CD8-positive, alpha-beta memory T cell (primary cell): ENCODE measurements at regions of chr7 and their contacts with region 1.

Region 1: DNA sequence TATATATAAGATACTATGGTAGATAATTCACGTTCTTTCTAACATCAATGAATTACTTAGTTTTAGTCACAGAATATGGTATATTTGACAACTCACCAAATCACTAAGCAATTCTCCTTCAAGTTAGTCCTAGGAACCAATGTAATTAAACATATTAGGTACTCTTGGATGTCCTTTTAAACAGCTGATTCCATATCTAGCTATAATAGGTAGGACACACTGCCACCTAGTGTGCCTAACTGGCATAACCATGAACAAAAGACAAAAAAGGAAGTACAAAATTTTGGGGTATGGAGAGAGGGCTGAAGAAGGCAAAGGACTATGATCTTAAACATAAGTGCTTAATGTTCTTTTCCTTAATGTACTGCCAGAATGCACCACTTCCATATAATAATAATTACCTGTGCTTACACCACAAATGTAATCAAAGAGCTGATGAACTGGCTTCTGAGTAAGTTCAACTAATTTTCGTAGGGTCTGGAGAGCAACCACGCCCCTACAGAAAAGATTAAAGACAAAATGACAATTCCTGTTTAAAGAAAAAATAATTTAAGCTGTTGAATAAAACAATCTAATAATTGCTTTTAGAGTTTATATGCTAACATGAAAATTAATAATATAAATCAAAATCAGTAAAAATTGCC is 28.7 kb downstream of the PNPLA8 start:
- DNase-seq: peak in 3 of 5 donors; percentile 15 to 59 (median 21)
- H3K4me3 ChIP-seq: no peak overlapping the region
- H3K4me3 Mint-ChIP-seq: no peak overlapping the region
- H3K27ac ChIP-seq: no peak overlapping the region
- H3K27ac Mint-ChIP-seq: peak overlapping the region in 1 of 8 donors; percentile 35
- H3K4me1 ChIP-seq: no peaks in the 10 kb centered on the region
- H3K4me1 Mint-ChIP-seq: peaks cover 0 to 4% (median 0%) of the 10 kb centered on the region in 3 donors
- H3K27me3 ChIP-seq: no peaks in the 10 kb centered on the region
- H3K27me3 Mint-ChIP-seq: no peaks in the 10 kb centered on the region

Region 2: DNA sequence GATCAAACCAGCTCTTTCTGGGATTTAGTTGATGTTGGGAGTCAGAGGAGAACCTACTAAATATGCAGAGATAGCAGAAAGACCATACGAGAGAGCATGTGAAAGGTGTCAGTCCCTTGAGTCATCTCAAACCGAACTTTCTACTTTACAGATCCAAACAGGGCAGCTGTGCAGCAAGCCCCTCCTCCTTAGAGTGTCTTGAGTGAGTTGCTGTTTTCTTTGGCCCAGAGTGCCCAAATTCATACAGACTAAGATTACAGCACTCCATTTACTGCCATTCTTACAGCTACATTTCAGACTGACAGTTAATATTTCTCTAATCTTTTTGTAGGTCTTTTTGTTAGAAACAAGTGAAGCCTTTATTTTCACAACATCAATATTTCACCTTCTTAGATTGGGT is 94.3 kb before region 1 on chr7:
- CTCF ChIA-PET with region 1: no interaction called
- POLR2A ChIA-PET with region 1: no interaction called
- DNase-seq: no peak
- H3K4me3 ChIP-seq: no peak overlapping the region
- H3K4me3 Mint-ChIP-seq: peak overlapping the region in 1 of 7 donors; percentile 0
- H3K27ac ChIP-seq: no peak overlapping the region
- H3K27ac Mint-ChIP-seq: no peak overlapping the region
- H3K4me1 ChIP-seq: no peaks in the 10 kb centered on the region
- H3K4me1 Mint-ChIP-seq: no peaks in the 10 kb centered on the region
- H3K27me3 ChIP-seq: no peaks in the 10 kb centered on the region
- H3K27me3 Mint-ChIP-seq: peaks cover 0 to 11% of the 10 kb centered on the region in 2 donors

Region 3: DNA sequence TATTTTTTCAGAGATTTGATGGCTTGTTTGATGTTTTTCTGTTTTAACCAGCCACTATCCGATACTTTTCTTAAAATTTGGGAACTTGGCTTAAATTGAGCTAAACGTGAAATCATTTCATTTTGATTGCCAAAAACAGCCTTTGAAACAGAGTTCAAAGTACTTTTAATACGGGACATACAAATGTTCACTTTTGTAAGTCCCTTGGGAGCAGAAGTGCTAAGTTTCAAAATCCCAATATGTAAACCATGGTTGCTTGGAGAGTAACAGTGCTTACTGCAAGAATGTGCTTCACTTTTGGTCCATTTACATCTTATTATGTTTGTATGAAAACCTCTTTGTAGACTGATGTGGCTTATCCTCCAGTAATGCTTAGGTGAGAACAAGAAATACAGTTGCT is 17.8 kb after region 1 on chr7:
- CTCF ChIA-PET with region 1: interaction called, 10 read pairs
- POLR2A ChIA-PET with region 1: no interaction called
- DNase-seq: no peak
- H3K4me3 ChIP-seq: no peak overlapping the region
- H3K4me3 Mint-ChIP-seq: no peak overlapping the region
- H3K27ac ChIP-seq: no peak overlapping the region
- H3K27ac Mint-ChIP-seq: no peak overlapping the region
- H3K4me1 ChIP-seq: no peaks in the 10 kb centered on the region
- H3K4me1 Mint-ChIP-seq: peaks cover 21 to 51% (median 44%) of the 10 kb centered on the region in 3 donors
- H3K27me3 ChIP-seq: no peaks in the 10 kb centered on the region
- H3K27me3 Mint-ChIP-seq: no peaks in the 10 kb centered on the region